GM10248 (cell line): ENCODE measurements at regions of chr6 and their contacts with region 1.

Region 1: GRCh38 chr6:2976571-2977085 is 5.3 kb upstream of the SERPINB6 start:
- DNase-seq: no peak
- CTCF ChIP-seq: no peak

Region 2: GRCh38 chr6:2988426-2989331 is 12.1 kb after region 1 on chr6:
- CTCF ChIA-PET with region 1: interaction called, 40 read pairs
- POLR2A ChIA-PET with region 1: interaction called, 4 read pairs
- DNase-seq: peak; percentile 75
- CTCF ChIP-seq: peak; percentile 74

Region 3: DNA sequence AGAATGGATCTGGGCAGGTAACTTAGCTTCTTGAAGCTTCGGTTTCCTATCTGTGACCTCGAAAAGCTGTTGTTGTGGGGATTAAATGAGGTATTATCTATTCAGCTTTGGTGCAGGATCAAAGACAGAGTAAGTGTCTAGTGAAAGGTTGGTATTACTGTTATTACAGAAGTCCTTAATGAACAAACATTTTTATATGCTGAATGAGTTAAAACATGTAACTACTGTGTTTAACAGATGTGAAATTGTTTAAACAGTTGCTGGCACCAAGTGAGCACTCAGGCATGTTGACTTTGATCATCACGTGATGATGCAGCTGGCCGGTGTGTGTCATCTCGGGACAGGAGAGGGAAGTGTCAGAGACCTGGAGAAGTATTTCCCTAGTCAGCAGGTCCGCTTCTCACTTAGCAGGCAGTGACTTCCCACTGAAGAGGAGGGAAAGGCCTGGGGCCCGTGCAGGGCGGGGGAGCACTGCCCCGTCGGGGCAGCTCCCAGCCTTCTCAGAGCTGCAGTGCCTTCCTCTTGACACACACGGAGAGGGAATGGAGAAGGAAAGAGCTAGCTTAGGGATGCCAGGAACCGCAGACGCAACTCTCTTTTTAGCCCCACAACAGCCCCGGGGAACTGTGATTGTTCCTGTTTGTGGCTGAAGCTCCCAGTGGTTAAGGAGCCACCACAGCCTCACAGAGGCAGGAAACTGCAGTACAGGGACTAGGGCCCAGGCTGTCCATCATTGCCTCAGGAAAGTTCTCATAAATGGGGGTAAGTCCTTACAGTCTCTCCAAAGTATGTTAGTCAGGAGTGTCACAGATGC is 162.7 kb after region 1 on chr6:
- CTCF ChIA-PET with region 1: no interaction called
- POLR2A ChIA-PET with region 1: no interaction called
- DNase-seq: peak; percentile 47
- CTCF ChIP-seq: no peak